Ovary (tissue), 10 donors: ENCODE measurements at regions of chr2 and their contacts with region 1.

Region 1: GRCh38 chr2:34652636-34653035 is 1053.5 kb upstream of the FAM98A start:
- DNase-seq: no peak
- H3K4me3 ChIP-seq: no peak overlapping the region
- H3K27ac ChIP-seq: no peak overlapping the region
- H3K4me1 ChIP-seq: no peaks in the 10 kb centered on the region
- H3K27me3 ChIP-seq: no peaks in the 10 kb centered on the region
- CTCF ChIP-seq: no peak
- EP300 ChIP-seq: no peak
- POLR2A ChIP-seq: no peak

Region 2: GRCh38 chr2:34419856-34420255 is 232.8 kb before region 1 on chr2:
- intact Hi-C with region 1: loop called in 1 of 4 experiments (anchors 10 kb)
- DNase-seq: no peak
- H3K4me3 ChIP-seq: no peak overlapping the region
- H3K27ac ChIP-seq: no peak overlapping the region
- H3K4me1 ChIP-seq: no peaks in the 10 kb centered on the region
- H3K27me3 ChIP-seq: no peaks in the 10 kb centered on the region
- CTCF ChIP-seq: no peak
- EP300 ChIP-seq: no peak
- POLR2A ChIP-seq: no peak

Region 3: DNA sequence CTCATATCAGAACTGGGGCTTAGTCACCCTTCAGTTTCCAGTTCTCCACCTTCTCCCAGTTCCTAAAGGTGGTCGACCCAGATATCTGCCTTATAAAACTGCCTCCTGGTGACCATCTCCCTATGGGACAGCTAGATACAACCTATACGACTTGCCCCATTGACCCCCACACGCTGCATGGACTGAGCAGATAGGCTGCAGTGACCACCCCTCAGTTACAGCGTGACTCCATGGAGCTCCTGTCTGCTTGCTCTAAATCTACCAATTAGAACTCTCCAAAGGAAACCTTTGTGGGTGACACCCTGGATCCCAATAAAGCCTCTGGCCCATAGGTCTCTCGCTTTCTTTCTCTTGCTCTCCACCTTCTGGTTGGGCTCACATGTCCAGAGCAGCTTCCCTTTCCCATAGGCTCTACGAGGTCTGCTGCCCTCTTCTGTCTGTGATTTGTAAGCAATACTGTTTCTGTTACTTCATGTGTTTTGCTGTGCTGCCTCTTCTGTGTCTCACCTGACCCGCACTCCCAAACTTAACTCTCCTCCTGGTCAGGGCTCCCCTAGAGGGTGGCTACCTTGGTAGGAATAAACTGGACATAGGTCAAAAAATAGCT is 82.3 kb before region 1 on chr2:
- intact Hi-C with region 1: no loop called
- DNase-seq: no peak
- H3K4me3 ChIP-seq: no peak overlapping the region
- H3K27ac ChIP-seq: no peak overlapping the region
- H3K4me1 ChIP-seq: no peaks in the 10 kb centered on the region
- H3K27me3 ChIP-seq: no peaks in the 10 kb centered on the region
- CTCF ChIP-seq: no peak
- EP300 ChIP-seq: no peak
- POLR2A ChIP-seq: no peak